Activated T-helper 1 cell treated with anti-CD3 and anti-CD28 coated beads, Interleukin-12 subunit alpha, Interleukin-12 subunit beta, Interleukin-2, Interleukin-4 antibody, amounts not matched to agents 30 ng/mL and 10 ng/mL and 1 ng/mL, durations not matched to agents 14 hours and 24 hours and 36 hours (primary cell): ENCODE measurements at regions of chr3 and their contacts with region 1.

Region 1: GRCh38 chr3:42539869-42540714 is 37.6 kb downstream of the VIPR1 start:
- DNase-seq: peak; percentile 36
- H3K4me3 Mint-ChIP-seq: no peak overlapping the region
- H3K27ac Mint-ChIP-seq: no peak overlapping the region
- H3K4me1 Mint-ChIP-seq: peaks cover 6% of the 10 kb centered on the region
- H3K27me3 Mint-ChIP-seq: peaks cover 2% of the 10 kb centered on the region

Region 2: GRCh38 chr3:41574900-41575299 is 965.2 kb before region 1 on chr3:
- intact Hi-C with region 1: no loop called
- DNase-seq: no peak
- H3K4me3 Mint-ChIP-seq: no peak overlapping the region
- H3K27ac Mint-ChIP-seq: no peak overlapping the region
- H3K4me1 Mint-ChIP-seq: no peaks in the 10 kb centered on the region
- H3K27me3 Mint-ChIP-seq: no peaks in the 10 kb centered on the region

Region 3: DNA sequence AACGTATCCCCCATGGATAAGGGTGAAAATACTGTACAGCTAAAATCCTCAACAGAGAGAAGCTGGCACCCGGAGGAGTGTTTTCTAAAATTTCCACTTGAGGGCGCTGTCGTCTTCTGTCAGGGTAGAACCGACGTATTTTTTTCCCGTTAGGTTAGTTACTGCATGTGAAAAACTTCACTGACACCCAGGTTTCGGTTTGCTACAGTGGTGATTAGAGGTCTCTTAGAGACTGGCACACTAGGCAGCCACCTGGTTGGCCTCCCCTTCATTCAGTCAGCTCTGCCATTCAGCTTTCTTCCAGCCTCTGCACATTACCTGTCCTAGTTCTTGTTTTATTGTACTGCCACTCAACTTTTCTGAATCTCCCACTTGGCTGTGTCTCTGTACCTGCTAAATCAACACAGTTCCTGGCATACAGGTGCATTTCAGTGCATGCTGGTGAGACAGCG is 292.5 kb before region 1 on chr3:
- intact Hi-C with region 1: loop called (anchors 1 kb)
- DNase-seq: peak; percentile 30
- H3K4me3 Mint-ChIP-seq: no peak overlapping the region
- H3K27ac Mint-ChIP-seq: no peak overlapping the region
- H3K4me1 Mint-ChIP-seq: peaks cover 9% of the 10 kb centered on the region
- H3K27me3 Mint-ChIP-seq: peaks cover 33% of the 10 kb centered on the region

Region 4: DNA sequence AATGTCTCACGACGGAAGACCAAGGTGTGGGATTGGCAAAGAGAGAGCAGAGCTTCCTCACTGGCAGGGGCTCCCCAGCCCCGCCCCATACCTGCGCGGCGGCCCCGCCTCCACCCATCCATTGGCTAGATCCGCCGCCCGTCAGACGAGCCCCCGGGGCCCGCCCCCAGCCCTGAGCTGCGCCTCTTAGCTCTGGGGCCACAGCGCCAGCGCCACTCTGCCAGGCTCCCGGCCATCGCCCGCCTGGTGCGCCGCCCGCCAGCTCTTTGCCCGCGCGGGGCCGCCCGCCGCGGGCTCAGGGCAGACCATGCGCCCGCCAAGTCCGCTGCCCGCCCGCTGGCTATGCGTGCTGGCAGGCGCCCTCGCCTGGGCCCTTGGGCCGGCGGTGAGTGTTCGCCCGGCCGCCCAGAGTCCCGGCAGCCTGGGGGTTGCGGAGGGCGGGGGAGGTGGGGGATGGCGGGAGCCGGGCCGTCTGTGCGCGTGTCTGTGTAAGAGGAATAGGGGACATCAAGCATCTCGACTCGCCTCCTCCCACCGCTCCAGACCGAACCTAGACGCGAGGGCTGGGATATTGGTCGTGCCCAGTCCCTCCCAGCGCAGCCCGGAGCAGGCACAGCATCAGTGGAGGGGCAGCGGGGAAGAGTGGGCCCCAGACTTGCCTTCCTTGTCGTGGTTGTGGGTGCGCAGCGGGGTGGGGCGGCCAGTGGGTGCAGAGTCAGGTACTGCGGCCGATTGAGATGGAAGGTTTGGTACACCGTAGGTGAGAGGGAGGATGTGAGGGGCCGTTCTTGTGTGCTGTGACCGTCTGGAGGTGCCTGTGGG is 37.5 kb before region 1 on chr3 and contains the start of gene VIPR1:
- intact Hi-C with region 1: loop called (anchors 1 kb)
- DNase-seq: peak; percentile 85
- H3K4me3 Mint-ChIP-seq: peak within 1 kb of the TSS; percentile 86
- H3K27ac Mint-ChIP-seq: no peak within 1 kb of the TSS
- H3K4me1 Mint-ChIP-seq: peaks cover 31% of the 10 kb centered on the region
- H3K27me3 Mint-ChIP-seq: peaks cover 26% of the 10 kb centered on the region
- total RNA-seq, gene VIPR1: 0.69 and 0.88 TPM in 2 replicates

Region 5: GRCh38 chr3:42562047-42562907 is 22.2 kb after region 1 on chr3:
- intact Hi-C with region 1: no loop called
- DNase-seq: no peak
- H3K4me3 Mint-ChIP-seq: no peak overlapping the region
- H3K27ac Mint-ChIP-seq: peak overlapping the region; percentile 82
- H3K4me1 Mint-ChIP-seq: peaks cover 17% of the 10 kb centered on the region
- H3K27me3 Mint-ChIP-seq: no peaks in the 10 kb centered on the region